ENCODE measurements at regions of chr12 and their contacts with region 1.

Region 1: DNA sequence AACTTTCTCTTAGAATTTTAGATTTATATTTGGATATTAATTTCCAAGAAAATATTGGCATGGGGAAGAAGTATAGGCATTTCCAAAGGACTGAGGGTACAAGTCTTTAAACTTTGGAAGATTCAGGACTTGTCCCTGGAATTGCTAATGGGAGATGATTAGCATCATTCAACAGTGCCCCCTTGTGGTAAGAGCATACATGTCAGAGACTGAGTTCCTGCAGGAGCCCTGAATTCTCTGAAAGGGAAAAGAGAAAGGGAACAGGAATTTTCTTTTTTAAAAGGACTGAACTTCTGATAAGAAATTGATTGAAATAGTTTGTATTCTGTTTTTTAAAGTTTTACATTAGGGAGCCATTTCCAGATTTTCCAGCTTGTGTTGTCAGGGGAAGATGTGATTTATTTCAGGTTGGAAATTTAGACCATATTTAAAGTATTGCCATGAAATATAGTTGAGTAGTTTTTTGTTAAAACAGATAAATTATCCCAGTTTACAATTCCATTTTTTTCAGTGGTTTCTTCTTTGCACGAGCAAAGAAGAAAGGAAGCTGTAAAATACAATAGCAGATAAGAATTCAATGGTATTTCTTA is 44.0 kb upstream of the REP15 start:
- DNase-seq: peak in 6 of 9 experiments; percentile 7 to 67 (median 30)
- ATAC-seq: no peak
- H3K4me3 ChIP-seq: no peak overlapping the region
- H3K4me3 Mint-ChIP-seq: no peak overlapping the region
- H3K27ac ChIP-seq: no peak overlapping the region
- H3K27ac Mint-ChIP-seq: no peak overlapping the region
- H3K4me1 ChIP-seq: no peaks in the 10 kb centered on the region
- H3K4me1 Mint-ChIP-seq: peaks cover 2% of the 10 kb centered on the region
- H3K27me3 ChIP-seq: no peaks in the 10 kb centered on the region
- H3K27me3 Mint-ChIP-seq: no peaks in the 10 kb centered on the region
- CTCF ChIP-seq: peak; percentile 94

Region 2: DNA sequence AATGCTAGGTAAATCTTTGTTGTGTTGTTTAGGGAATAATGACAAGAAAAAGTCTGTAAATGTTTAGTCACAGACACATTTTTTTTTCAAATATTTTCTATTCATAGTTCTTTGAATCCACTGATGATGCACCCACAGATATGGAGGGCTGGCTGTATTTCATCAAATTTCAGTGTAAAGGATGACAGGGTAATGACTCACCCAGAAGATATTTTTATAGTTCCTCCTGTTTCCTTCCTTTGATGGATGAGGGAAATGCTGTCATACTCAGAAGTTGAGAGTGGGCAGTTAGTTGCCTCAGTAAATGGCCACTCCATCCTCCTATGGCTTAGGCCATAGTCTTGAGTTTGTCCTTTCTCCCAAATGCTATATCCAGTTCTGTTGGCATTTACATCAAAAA is 33.0 kb before region 1 on chr12:
- CTCF ChIA-PET with region 1: no interaction called
- POLR2A ChIA-PET with region 1: no interaction called
- intact Hi-C with region 1: no loop called
- DNase-seq: peak in 1 of 9 experiments; percentile 4
- ATAC-seq: no peak
- H3K4me3 ChIP-seq: no peak overlapping the region
- H3K4me3 Mint-ChIP-seq: no peak overlapping the region
- H3K27ac ChIP-seq: no peak overlapping the region
- H3K27ac Mint-ChIP-seq: no peak overlapping the region
- H3K4me1 ChIP-seq: no peaks in the 10 kb centered on the region
- H3K4me1 Mint-ChIP-seq: no peaks in the 10 kb centered on the region
- H3K27me3 ChIP-seq: no peaks in the 10 kb centered on the region
- H3K27me3 Mint-ChIP-seq: no peaks in the 10 kb centered on the region
- CTCF ChIP-seq: no peak

Region 3: DNA sequence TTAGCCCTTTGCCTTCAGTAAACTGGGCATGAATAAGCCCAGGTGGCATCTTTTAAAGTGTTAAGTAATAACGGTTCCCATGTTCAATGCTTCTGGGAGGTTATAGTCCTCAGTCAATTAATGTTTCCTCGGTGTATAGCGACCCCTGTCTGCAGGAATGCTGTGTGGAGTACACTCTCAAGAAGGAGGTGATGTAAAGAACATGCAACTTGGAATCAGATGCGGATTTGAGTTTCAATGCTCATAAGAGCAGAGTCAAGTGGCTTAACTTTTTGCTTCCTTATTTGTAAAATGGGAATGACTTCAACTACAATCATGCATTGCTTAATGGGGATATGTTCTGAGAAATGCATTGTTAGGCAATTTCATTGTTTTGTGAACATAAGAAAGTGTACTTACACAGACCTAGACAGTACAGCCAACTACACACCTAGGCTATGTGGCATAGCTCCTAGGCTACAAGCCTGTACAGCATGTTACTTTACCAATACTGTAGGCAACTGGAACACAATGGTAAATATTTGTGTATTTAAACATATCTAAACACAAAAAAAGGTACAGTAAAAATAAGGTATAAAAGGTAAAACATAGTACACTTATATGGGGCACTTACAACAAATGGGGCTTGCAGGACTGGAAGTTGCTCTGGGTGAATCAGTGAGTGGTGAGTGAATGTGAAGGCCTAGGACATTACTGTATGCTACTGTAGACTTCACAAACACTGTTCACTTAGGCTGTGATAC is 51.6 kb after region 1 on chr12:
- CTCF ChIA-PET with region 1: interaction called, 3 read pairs
- POLR2A ChIA-PET with region 1: no interaction called
- intact Hi-C with region 1: loop called in 1 of 2 experiments (anchors 1 kb)
- DNase-seq: peak; percentile 32 to 77 (median 64)
- ATAC-seq: peak; percentile 98
- H3K4me3 ChIP-seq: no peak overlapping the region
- H3K4me3 Mint-ChIP-seq: no peak overlapping the region
- H3K27ac ChIP-seq: no peak overlapping the region
- H3K27ac Mint-ChIP-seq: no peak overlapping the region
- H3K4me1 ChIP-seq: no peaks in the 10 kb centered on the region
- H3K4me1 Mint-ChIP-seq: no peaks in the 10 kb centered on the region
- H3K27me3 ChIP-seq: no peaks in the 10 kb centered on the region
- H3K27me3 Mint-ChIP-seq: peaks cover 6% of the 10 kb centered on the region
- CTCF ChIP-seq: peak; percentile 74

Region 4: GRCh38 chr12:27785882-27786570 is 133.8 kb after region 1 on chr12:
- CTCF ChIA-PET with region 1: no interaction called
- POLR2A ChIA-PET with region 1: no interaction called
- intact Hi-C with region 1: no loop called
- DNase-seq: no peak
- ATAC-seq: no peak
- H3K4me3 ChIP-seq: no peak overlapping the region
- H3K4me3 Mint-ChIP-seq: no peak overlapping the region
- H3K27ac ChIP-seq: no peak overlapping the region
- H3K27ac Mint-ChIP-seq: no peak overlapping the region
- H3K4me1 ChIP-seq: peaks cover 10% of the 10 kb centered on the region
- H3K4me1 Mint-ChIP-seq: peaks cover 68% of the 10 kb centered on the region
- H3K27me3 ChIP-seq: no peaks in the 10 kb centered on the region
- H3K27me3 Mint-ChIP-seq: no peaks in the 10 kb centered on the region
- CTCF ChIP-seq: no peak

Measured in CD8-positive, alpha-beta T cell (primary cell).